ENCODE measurements at regions of chr14 and their contacts with region 1.

Region 1: GRCh38 chr14:35416108-35416750 is 11.7 kb upstream of the NFKBIA start:
- DNase-seq: no peak
- H3K4me3 ChIP-seq: no peak overlapping the region
- H3K4me3 Mint-ChIP-seq: no peak overlapping the region
- H3K27ac Mint-ChIP-seq: no peak overlapping the region
- H3K4me1 ChIP-seq: no peaks in the 10 kb centered on the region
- H3K4me1 Mint-ChIP-seq: peaks cover 8% of the 10 kb centered on the region
- H3K27me3 ChIP-seq: no peaks in the 10 kb centered on the region
- H3K27me3 Mint-ChIP-seq: no peaks in the 10 kb centered on the region
- CTCF ChIP-seq: no peak

Region 2: DNA sequence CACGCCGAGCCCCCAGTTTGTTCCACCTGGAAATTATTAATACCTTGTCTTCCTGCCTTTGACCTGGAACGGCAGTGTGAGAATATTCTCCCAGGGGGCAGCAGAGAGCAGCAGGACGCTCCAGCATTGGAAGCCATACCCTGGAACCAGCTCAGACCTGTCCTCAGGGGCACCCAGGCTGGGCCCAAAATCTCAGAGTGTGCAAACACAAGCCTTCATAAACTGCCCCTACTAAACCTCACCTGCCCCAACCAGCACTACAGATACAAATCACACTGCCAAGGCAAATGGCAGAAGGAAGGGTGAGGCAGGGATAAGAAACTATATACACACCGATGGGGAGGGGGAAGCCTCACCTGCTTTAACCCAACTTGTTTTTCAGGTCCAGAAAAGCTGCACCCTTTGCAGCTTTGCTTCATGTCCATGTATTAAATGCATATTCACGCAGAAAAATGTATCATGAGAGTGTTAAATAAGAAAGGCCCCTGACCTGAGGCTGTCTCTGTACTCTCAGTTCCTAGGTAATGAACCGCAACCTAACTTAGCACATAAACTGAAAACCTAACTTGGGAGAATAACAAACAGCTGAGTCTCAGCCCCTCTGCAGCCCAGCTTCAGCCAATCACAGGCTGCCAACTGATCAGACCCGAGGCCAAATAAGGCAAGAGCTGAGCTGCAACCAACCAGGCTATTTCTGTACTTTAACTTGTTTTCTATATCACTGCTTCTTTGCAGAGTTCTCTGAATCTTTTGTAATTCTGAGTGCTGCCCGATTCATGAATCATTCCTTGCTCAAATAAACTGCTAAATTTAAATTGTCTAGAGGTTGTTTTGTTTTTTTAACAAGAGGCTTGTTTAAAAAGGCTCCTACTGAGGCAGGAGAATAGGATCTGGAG is 1084.3 kb before region 1 on chr14:
- CTCF ChIA-PET with region 1: no interaction called
- POLR2A ChIA-PET with region 1: no interaction called
- intact Hi-C with region 1: loop called (anchors 10 kb)
- DNase-seq: peak; percentile 73 to 77
- H3K4me3 ChIP-seq: no peak overlapping the region
- H3K4me3 Mint-ChIP-seq: no peak overlapping the region
- H3K27ac Mint-ChIP-seq: no peak overlapping the region
- H3K4me1 ChIP-seq: peaks cover 28% of the 10 kb centered on the region
- H3K4me1 Mint-ChIP-seq: peaks cover 16% of the 10 kb centered on the region
- H3K27me3 ChIP-seq: no peaks in the 10 kb centered on the region
- H3K27me3 Mint-ChIP-seq: no peaks in the 10 kb centered on the region
- CTCF ChIP-seq: peak; percentile 61 to 65

Region 3: GRCh38 chr14:34678306-34678705 is 737.9 kb before region 1 on chr14:
- CTCF ChIA-PET with region 1: no interaction called
- POLR2A ChIA-PET with region 1: no interaction called
- intact Hi-C with region 1: loop called (anchors 10 kb)
- DNase-seq: no peak
- H3K4me3 ChIP-seq: no peak overlapping the region
- H3K4me3 Mint-ChIP-seq: no peak overlapping the region
- H3K27ac Mint-ChIP-seq: no peak overlapping the region
- H3K4me1 ChIP-seq: no peaks in the 10 kb centered on the region
- H3K4me1 Mint-ChIP-seq: no peaks in the 10 kb centered on the region
- H3K27me3 ChIP-seq: no peaks in the 10 kb centered on the region
- H3K27me3 Mint-ChIP-seq: no peaks in the 10 kb centered on the region
- CTCF ChIP-seq: no peak

Region 4: DNA sequence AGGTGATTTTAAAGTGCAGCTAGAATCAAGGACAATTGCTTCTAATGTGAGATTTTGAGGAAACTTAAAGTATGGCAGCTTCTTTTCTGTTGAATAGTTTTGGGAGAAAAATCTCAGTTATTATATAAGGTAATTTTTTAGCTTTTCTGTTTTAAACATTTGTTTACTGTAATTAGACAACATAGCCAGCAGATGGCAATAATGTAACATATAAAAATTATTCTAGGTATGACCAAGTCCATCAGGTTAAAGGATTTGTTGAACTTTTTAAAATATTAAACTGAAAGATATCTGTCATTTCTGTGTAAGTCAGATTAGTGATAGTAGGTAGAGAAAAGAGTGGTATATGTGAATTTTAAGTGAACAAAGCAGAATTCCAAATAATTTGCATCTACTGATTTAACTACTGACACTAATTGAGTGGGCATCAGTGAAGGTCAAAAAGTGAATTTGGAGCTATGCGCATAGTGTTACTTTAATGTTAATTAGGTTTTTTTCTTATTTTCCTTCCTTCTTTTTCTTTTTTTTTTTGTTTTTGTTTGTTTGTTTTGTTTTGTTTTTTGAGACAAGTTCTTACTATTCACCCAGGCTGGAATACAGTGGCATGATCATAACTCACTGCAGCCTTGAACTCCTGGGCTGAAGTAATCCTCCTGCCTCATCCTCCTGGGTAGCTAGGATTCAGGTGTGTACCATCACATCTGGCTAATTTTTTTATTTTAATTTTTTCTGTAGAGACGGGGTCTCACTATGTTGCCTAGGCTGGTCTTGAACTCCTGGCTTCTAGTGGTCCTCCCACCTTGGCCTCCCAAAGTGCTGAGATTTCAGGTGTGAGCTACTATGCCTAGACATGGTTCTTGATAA is 275.3 kb before region 1 on chr14:
- CTCF ChIA-PET with region 1: interaction called, 5 read pairs
- POLR2A ChIA-PET with region 1: no interaction called
- intact Hi-C with region 1: loop called (anchors 1 kb)
- DNase-seq: no peak
- H3K4me3 ChIP-seq: no peak overlapping the region
- H3K4me3 Mint-ChIP-seq: no peak overlapping the region
- H3K27ac Mint-ChIP-seq: no peak overlapping the region
- H3K4me1 ChIP-seq: no peaks in the 10 kb centered on the region
- H3K4me1 Mint-ChIP-seq: no peaks in the 10 kb centered on the region
- H3K27me3 ChIP-seq: no peaks in the 10 kb centered on the region
- H3K27me3 Mint-ChIP-seq: no peaks in the 10 kb centered on the region
- CTCF ChIP-seq: no peak

Region 5: DNA sequence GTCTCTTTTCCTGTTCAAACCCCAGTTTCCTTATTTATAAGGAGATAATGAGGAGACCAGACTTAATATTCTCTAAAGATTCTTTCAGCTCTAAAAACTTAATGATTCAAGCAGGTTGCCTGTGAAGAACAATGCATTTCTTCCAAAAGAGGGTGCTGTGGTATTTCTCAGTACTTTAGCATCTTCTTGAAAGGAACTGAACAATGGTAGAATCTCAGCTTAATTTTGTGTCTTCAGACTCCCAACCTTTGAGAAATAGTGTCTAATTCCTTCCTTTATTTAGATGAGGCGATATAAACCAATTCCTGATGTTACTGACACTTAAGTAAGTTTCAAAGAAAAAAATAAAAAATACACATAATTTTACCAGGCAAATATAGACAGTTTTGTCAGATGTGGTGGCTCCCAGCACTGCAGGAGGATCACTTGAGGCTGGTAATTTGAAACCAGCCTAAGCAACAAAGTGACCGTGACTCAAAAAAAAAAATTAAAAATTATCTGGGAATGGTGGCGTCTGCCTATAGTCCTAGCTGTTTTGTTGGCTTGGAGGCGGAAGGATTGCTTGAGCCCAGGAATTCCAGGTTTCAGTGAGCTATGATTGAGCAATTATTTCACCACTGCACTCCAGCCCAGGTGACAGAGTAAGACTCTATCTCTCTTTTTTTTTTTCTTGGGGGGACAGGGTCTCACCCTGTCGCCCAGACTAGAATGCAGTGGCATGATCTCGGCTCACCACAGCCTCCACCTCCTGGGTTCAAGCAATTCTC is 200.9 kb before region 1 on chr14:
- CTCF ChIA-PET with region 1: interaction called, 7 read pairs
- POLR2A ChIA-PET with region 1: no interaction called
- intact Hi-C with region 1: loop called (anchors 1 kb)
- DNase-seq: peak in 1 of 2 experiments; percentile 36
- H3K4me3 ChIP-seq: no peak overlapping the region
- H3K4me3 Mint-ChIP-seq: no peak overlapping the region
- H3K27ac Mint-ChIP-seq: no peak overlapping the region
- H3K4me1 ChIP-seq: peaks cover 10% of the 10 kb centered on the region
- H3K4me1 Mint-ChIP-seq: peaks cover 8% of the 10 kb centered on the region
- H3K27me3 ChIP-seq: no peaks in the 10 kb centered on the region
- H3K27me3 Mint-ChIP-seq: no peaks in the 10 kb centered on the region
- CTCF ChIP-seq: peak; percentile 41 to 53

Region 6: GRCh38 chr14:35336494-35337268 is 79.5 kb before region 1 on chr14:
- CTCF ChIA-PET with region 1: no interaction called
- POLR2A ChIA-PET with region 1: no interaction called
- intact Hi-C with region 1: no loop called
- DNase-seq: no peak
- H3K4me3 ChIP-seq: no peak overlapping the region
- H3K4me3 Mint-ChIP-seq: no peak overlapping the region
- H3K27ac Mint-ChIP-seq: peak overlapping the region; percentile 79
- H3K4me1 ChIP-seq: peaks cover 48% of the 10 kb centered on the region
- H3K4me1 Mint-ChIP-seq: peaks cover 29% of the 10 kb centered on the region
- H3K27me3 ChIP-seq: no peaks in the 10 kb centered on the region
- H3K27me3 Mint-ChIP-seq: no peaks in the 10 kb centered on the region
- CTCF ChIP-seq: no peak

Region 7: GRCh38 chr14:35398071-35398632 is 18.1 kb before region 1 on chr14:
- CTCF ChIA-PET with region 1: no interaction called
- POLR2A ChIA-PET with region 1: no interaction called
- intact Hi-C with region 1: no loop called
- DNase-seq: no peak
- H3K4me3 ChIP-seq: no peak overlapping the region
- H3K4me3 Mint-ChIP-seq: peak overlapping the region; percentile 23
- H3K27ac Mint-ChIP-seq: peak overlapping the region; percentile 83
- H3K4me1 ChIP-seq: peaks cover 29% of the 10 kb centered on the region
- H3K4me1 Mint-ChIP-seq: peaks cover 14% of the 10 kb centered on the region
- H3K27me3 ChIP-seq: no peaks in the 10 kb centered on the region; the same call in 1 of the 2 replicates
- H3K27me3 Mint-ChIP-seq: no peaks in the 10 kb centered on the region
- CTCF ChIP-seq: no peak